GM18951 (cell line): ENCODE measurements at regions of chr9 and their contacts with region 1.

Region 1: DNA sequence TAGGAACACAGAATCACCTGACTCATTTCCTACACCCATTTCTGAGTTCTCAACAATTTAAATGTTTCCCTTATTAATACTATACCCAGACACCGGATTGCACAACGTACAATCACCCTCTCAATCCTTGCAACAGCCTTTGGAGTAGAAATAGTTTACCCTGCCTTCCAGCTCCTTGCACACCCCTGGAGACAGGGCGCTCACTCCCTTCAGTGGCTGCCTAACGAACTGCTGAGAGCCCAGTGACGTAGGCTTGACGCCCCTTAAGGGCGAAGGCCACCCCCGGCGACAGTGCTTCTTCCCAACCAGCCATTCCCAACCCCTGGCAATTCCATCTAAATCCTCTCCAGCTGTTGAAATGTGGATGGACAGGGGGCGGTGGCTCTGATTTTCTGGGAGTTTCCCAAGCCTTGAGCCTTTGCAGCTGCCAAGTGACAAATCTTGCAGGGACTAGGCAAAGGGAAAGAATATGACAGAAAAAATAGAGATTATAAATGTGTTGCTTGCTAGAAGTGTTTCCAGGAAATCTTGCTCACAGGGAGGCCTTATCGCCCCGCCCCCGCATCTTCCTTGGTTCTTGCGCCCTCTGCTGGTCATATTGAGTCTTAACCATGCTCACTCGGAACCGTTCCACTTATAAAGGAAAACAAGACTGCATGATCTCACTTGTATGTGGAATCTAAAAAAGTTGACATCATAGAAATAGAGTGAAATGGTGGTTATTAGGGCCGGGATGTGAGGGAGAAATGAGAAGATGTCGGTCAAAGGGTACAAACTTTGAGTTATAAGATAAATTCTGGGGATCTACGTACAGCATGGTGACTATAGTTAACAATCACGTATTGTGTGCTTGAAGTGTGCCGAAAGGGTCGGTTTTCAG is 7.6 kb upstream of the BARX1 start:
- POLR2A ChIP-seq: no peak

Region 2: GRCh38 chr9:93682232-93682968 is 280.4 kb before region 1 on chr9:
- in situ Hi-C with region 1: loop called (anchors 25 kb)
- POLR2A ChIP-seq: no peak